CD8-positive, alpha-beta T cell (primary cell): ENCODE measurements at regions of chr3 and their contacts with region 1.

Region 1: GRCh38 chr3:122514123-122515019 is at the start of gene KPNA1:
- DNase-seq: peak; percentile 74 to 95 (median 85)
- ATAC-seq: peak; percentile 86
- H3K4me3 ChIP-seq: peak within 1 kb of the TSS; percentile 67 to 74
- H3K4me3 Mint-ChIP-seq: peak within 1 kb of the TSS; percentile 74
- H3K27ac ChIP-seq: peak within 1 kb of the TSS; percentile 88 to 89
- H3K27ac Mint-ChIP-seq: peak within 1 kb of the TSS; percentile 89
- H3K4me1 ChIP-seq: peaks cover 18% of the 10 kb centered on the region
- H3K4me1 Mint-ChIP-seq: peaks cover 42% of the 10 kb centered on the region
- H3K27me3 ChIP-seq: no peaks in the 10 kb centered on the region
- H3K27me3 Mint-ChIP-seq: no peaks in the 10 kb centered on the region
- CTCF ChIP-seq: no peak
- total RNA-seq, gene KPNA1: 39.3 to 45.0 TPM

Region 2: GRCh38 chr3:120742198-120742849 is 1772.0 kb before region 1 on chr3 and contains the starts of genes GTF2E1 and RABL3:
- CTCF ChIA-PET with region 1: no interaction called
- POLR2A ChIA-PET with region 1: no interaction called
- intact Hi-C with region 1: loop called in 1 of 2 experiments (anchors 10 kb)
- DNase-seq: peak; percentile 93 to 99 (median 97)
- ATAC-seq: peak; percentile 96
- H3K4me3 ChIP-seq: peak within 1 kb of the TSS; percentile 89 to 90
- H3K4me3 Mint-ChIP-seq: peak within 1 kb of the TSS; percentile 94
- H3K27ac ChIP-seq: peak within 1 kb of the TSS; percentile 97 to 98
- H3K27ac Mint-ChIP-seq: peak within 1 kb of the TSS; percentile 98
- H3K4me1 ChIP-seq: peaks cover 16% of the 10 kb centered on the region
- H3K4me1 Mint-ChIP-seq: peaks cover 49% of the 10 kb centered on the region
- H3K27me3 ChIP-seq: no peaks in the 10 kb centered on the region
- H3K27me3 Mint-ChIP-seq: no peaks in the 10 kb centered on the region
- CTCF ChIP-seq: no peak
- total RNA-seq, gene GTF2E1: 5.8 to 7.8 TPM
- total RNA-seq, gene RABL3: 14.0 to 15.2 TPM

Region 3: DNA sequence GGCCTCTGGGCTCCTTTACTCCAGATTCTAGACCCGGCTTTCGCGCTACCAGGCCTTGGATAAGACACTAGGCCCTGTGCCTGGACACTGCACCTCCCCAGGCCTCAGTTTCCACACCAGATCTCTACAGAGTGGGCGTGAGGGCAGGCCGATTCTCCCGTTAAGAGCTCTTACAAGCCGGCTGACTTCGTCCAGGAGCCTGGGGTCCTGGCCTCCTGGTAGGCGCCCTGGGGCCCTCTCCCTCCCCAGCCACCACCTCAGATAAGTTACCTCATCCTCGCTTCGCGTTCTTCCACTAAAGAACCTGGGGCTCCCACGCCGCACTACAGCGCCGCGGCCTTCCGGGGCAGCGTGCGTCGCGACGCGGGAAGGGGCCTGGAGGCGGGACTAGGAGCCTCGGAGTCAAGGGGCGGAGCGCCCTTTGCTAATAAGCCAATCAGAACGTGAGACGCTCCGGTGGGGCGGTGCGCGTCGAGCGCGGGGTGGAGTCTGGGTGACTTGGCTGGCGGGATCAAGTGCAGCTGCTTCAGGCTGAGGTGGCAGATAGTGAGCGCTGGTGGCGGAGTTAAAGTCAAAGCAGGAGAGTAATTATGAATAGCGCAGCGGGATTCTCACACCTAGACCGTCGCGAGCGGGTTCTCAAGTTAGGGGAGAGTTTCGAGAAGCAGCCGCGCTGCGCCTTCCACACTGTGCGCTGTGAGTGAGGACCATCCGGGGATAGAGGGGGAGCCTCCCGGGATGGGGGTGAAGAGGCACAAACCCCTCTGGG is 679.5 kb before region 1 on chr3 and contains the starts of genes EAF2 and IQCB1:
- CTCF ChIA-PET with region 1: no interaction called
- POLR2A ChIA-PET with region 1: no interaction called
- intact Hi-C with region 1: loop called (anchors 2 to 10 kb)
- DNase-seq: peak; percentile 91 to 98 (median 95)
- ATAC-seq: peak; percentile 97
- H3K4me3 ChIP-seq: peak within 1 kb of the TSS; percentile 74 to 91
- H3K4me3 Mint-ChIP-seq: peak within 1 kb of the TSS; percentile 93
- H3K27ac ChIP-seq: peak within 1 kb of the TSS; percentile 82 to 87
- H3K27ac Mint-ChIP-seq: peak within 1 kb of the TSS; percentile 94
- H3K4me1 ChIP-seq: peaks cover 25% of the 10 kb centered on the region
- H3K4me1 Mint-ChIP-seq: peaks cover 53% of the 10 kb centered on the region
- H3K27me3 ChIP-seq: no peaks in the 10 kb centered on the region
- H3K27me3 Mint-ChIP-seq: no peaks in the 10 kb centered on the region
- CTCF ChIP-seq: no peak
- total RNA-seq, gene EAF2: 3.5 to 3.7 TPM
- total RNA-seq, gene IQCB1: 36.5 to 42.2 TPM

Region 4: DNA sequence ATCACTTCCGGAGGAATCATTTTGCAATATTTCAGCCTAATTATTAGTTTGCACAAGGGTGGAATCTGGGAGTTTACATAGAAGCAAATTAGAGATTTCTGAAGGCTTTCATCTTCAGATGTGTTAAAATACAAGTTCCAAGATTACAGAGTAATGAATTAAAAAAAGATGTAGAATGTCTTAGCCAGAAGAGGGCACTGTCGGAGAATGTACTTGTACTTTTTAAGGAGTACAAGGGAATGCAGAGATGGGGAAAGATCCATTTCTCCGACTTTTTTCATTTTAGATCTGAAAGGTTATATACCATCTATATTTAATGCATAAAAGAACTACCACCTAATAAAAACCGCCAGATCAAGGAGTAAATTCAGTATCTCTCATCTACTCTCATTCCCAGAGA is 55.4 kb before region 1 on chr3:
- CTCF ChIA-PET with region 1: interaction called, 3 read pairs
- POLR2A ChIA-PET with region 1: no interaction called
- intact Hi-C with region 1: loop called in 1 of 2 experiments (anchors 5 kb)
- DNase-seq: peak in 2 of 9 experiments; percentile 15 to 23
- ATAC-seq: no peak
- H3K4me3 ChIP-seq: no peak overlapping the region
- H3K4me3 Mint-ChIP-seq: no peak overlapping the region
- H3K27ac ChIP-seq: no peak overlapping the region
- H3K27ac Mint-ChIP-seq: no peak overlapping the region
- H3K4me1 ChIP-seq: no peaks in the 10 kb centered on the region
- H3K4me1 Mint-ChIP-seq: peaks cover 6% of the 10 kb centered on the region
- H3K27me3 ChIP-seq: no peaks in the 10 kb centered on the region
- H3K27me3 Mint-ChIP-seq: no peaks in the 10 kb centered on the region
- CTCF ChIP-seq: peak; percentile 15

Region 5: GRCh38 chr3:122564155-122564912 is 50.0 kb after region 1 on chr3 and contains the starts of genes DTX3L and PARP9:
- CTCF ChIA-PET with region 1: no interaction called
- POLR2A ChIA-PET with region 1: no interaction called
- intact Hi-C with region 1: loop called (anchors 2 kb)
- DNase-seq: peak; percentile 39 to 91 (median 80)
- ATAC-seq: peak; percentile 93
- H3K4me3 ChIP-seq: peak within 1 kb of the TSS; percentile 81 to 85
- H3K4me3 Mint-ChIP-seq: peak within 1 kb of the TSS; percentile 92
- H3K27ac ChIP-seq: peak within 1 kb of the TSS; percentile 83 to 88
- H3K27ac Mint-ChIP-seq: peak within 1 kb of the TSS; percentile 96
- H3K4me1 ChIP-seq: peaks cover 39% of the 10 kb centered on the region
- H3K4me1 Mint-ChIP-seq: peaks cover 75% of the 10 kb centered on the region
- H3K27me3 ChIP-seq: no peaks in the 10 kb centered on the region
- H3K27me3 Mint-ChIP-seq: no peaks in the 10 kb centered on the region
- CTCF ChIP-seq: no peak
- total RNA-seq, gene DTX3L: 14.1 to 14.3 TPM
- total RNA-seq, gene PARP9: 12.0 to 12.1 TPM

Region 6: DNA sequence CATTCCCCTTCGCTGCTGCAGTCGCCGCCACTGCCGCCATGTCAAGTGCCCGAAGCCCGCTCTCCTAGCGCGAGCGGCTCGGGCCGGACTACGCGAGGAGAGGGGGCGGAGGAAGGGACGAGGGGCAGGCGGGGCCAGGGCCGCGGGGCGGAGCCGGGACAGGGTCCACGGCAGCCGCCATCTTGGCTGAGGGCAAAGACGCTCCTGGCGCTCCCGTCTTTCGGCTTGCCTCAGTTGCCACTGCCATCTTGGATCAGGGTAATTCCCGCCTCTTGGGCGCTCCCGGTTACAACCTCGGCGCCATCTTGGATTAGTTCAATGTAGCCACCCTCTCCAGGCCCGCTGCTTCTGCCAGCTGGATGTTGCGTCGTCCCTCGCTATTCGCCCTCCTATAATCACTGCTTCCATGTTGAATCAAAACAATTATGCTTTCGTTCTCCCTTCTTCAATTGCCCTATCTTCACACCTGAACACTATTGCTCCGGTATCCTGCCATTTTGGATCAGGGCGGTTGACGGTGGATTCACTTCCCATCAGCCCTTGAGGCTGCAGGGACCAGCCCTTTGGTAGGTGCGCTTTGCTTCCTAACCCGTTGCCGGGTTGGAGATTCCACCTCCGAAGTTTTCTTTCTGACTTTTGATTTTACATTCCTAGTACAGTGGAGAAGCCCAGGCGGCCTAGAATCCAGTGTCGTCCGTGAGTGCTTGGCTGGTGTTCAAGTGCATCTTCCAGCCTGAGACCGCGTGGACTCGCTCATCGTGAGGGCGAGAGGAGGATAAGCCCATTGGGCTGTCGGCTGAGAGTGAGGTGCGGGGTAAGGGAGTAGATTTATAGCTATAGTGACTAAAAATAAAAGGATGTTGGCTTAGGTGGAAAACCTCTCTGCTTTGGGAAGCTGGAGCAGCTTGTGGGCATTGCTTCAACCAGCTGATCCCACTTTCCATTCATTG is 1070.9 kb after region 1 on chr3 and contains the start of gene HACD2:
- CTCF ChIA-PET with region 1: no interaction called
- POLR2A ChIA-PET with region 1: no interaction called
- intact Hi-C with region 1: loop called (anchors 10 kb)
- DNase-seq: peak; percentile 88 to 97 (median 95)
- ATAC-seq: peak; percentile 91
- H3K4me3 ChIP-seq: peak within 1 kb of the TSS; percentile 74 to 87
- H3K4me3 Mint-ChIP-seq: no peak within 1 kb of the TSS
- H3K27ac ChIP-seq: peak within 1 kb of the TSS; percentile 62 to 92
- H3K27ac Mint-ChIP-seq: peak within 1 kb of the TSS; percentile 90
- H3K4me1 ChIP-seq: peaks cover 20% of the 10 kb centered on the region
- H3K4me1 Mint-ChIP-seq: peaks cover 20% of the 10 kb centered on the region
- H3K27me3 ChIP-seq: no peaks in the 10 kb centered on the region
- H3K27me3 Mint-ChIP-seq: no peaks in the 10 kb centered on the region
- CTCF ChIP-seq: no peak
- total RNA-seq, gene HACD2: 12.9 to 13.4 TPM